ENCODE measurements at regions of chr6 and their contacts with region 1.

Region 1: DNA sequence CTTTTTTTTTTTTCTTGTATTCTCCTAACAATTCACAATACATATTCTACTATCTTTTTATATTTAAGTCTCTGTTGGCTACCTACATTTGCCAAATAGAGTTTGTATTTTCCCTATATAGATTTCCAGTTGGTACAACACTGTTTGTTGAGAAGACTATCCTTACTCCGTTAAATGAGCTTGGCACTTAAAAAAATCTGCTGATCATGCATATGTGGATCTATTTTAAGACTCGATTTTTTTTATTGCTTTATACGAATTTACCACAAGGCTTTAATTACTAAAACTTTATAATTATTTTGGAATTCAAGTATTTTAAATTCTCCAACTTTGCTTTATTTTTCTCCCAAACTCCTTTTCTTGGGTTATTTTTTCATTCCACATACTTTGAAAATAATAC is 855.6 kb downstream of the C6orf118 start:
- DNase-seq: no peak
- H3K4me3 ChIP-seq: no peak overlapping the region
- H3K27ac ChIP-seq: no peak overlapping the region
- H3K4me1 ChIP-seq: no peaks in the 10 kb centered on the region
- CTCF ChIP-seq: no peak

Region 2: DNA sequence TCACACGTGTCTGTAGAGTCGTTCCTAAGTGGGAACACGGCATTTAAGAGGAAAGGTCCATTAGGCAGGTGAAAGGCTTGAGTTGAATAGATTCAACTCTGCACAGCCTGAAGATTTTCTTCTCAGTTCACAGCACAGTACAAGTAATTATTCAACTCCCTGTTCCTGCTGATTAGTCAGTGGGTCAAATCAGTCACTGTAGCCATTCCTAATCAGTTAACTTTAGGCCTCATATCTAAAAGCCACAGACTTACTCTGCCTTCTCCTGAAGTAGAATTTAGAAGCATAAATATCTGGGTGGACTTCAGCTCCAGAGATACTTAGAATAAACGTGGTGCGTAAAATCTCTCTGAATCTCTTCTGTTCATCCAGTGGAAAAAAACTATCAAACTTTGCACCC is 16.9 kb before region 1 on chr6:
- CTCF ChIA-PET with region 1: no interaction called
- POLR2A ChIA-PET with region 1: no interaction called
- intact Hi-C with region 1: loop called (anchors 1 kb)
- DNase-seq: no peak
- H3K4me3 ChIP-seq: no peak overlapping the region
- H3K27ac ChIP-seq: no peak overlapping the region
- H3K4me1 ChIP-seq: no peaks in the 10 kb centered on the region
- CTCF ChIP-seq: no peak

Measured in OCI-LY7 (cell line).